Caco-2 (cell line): ENCODE measurements at regions of chr6 and their contacts with region 1.

Region 1: DNA sequence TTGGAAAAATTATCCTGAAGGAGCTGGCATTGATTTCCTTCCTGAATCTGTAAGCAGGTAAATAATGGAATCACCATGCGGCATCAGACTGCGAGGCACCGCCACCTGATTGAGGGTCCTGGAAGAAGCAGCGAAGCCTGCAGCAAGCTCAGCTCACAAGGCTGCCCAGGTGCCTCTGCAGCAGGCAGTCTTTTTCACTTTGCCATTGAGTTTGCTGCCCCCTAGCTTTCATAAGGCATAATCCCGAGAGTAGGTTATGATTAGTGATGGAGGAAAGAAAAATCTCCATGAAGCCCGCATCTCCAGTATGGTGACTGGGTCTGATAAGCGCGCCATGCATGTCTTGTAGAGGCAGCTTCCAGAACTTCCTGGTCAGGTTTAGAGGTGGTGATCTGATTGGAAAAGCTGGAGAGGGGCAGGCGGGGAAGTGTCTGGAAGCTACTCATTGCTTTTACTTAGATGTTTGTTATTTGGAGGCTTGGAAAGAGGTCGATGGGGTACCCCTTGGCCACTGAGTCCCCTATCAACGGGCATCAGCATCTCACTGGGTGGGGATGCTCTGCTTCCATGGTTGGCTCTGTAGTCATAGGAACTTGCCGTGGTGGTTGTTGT is 26.7 kb downstream of the IYD start:
- DNase-seq: peak; percentile 56 to 71
- H3K4me3 ChIP-seq: no peak overlapping the region
- H3K4me3 Mint-ChIP-seq: no peak overlapping the region
- H3K27ac Mint-ChIP-seq: no peak overlapping the region
- H3K4me1 ChIP-seq: no peaks in the 10 kb centered on the region
- H3K4me1 Mint-ChIP-seq: no peaks in the 10 kb centered on the region
- H3K27me3 ChIP-seq: no peaks in the 10 kb centered on the region
- H3K27me3 Mint-ChIP-seq: no peaks in the 10 kb centered on the region
- CTCF ChIP-seq: peak; percentile 64 to 78

Region 2: GRCh38 chr6:150079604-150080003 is 315.9 kb before region 1 on chr6:
- CTCF ChIA-PET with region 1: interaction called, 16 read pairs
- POLR2A ChIA-PET with region 1: no interaction called
- intact Hi-C with region 1: loop called (anchors 1 kb)
- DNase-seq: no peak
- H3K4me3 ChIP-seq: no peak overlapping the region
- H3K4me3 Mint-ChIP-seq: no peak overlapping the region
- H3K27ac Mint-ChIP-seq: no peak overlapping the region
- H3K4me1 ChIP-seq: no peaks in the 10 kb centered on the region
- H3K4me1 Mint-ChIP-seq: no peaks in the 10 kb centered on the region
- H3K27me3 ChIP-seq: no peaks in the 10 kb centered on the region; the same call in 1 of the 2 replicates
- H3K27me3 Mint-ChIP-seq: peaks cover 7% of the 10 kb centered on the region
- CTCF ChIP-seq: no peak

Region 3: DNA sequence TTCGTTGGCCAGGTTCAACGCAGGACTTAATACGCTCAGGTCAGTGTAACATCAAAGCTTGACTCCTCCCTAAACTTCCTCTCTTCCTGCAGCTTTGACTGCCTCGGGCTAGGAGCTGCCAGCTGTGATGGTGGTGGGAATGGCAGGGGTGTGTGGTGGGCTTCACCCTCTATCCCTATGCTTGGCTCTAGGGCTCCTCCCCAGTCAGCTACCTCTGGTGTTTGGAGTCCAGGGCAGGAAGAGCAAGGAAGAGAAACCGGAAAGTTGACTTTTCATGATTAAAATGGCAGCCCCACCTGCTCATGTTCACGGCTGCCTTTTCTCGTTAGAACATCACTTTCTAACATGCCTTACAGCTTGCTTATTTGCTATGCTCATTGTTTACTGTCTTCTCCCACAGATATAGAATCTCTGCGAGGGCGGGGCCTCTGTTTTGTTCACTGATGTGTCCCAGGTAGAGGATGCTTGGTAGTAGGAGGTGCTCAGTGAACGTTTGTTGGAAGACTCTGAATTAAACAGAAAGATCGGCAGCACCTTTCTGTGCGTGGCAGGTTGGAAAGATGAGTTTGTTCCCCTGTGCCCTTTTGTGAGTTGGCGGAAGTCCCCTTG is 268.7 kb before region 1 on chr6:
- CTCF ChIA-PET with region 1: no interaction called
- POLR2A ChIA-PET with region 1: no interaction called
- intact Hi-C with region 1: no loop called
- DNase-seq: no peak
- H3K4me3 ChIP-seq: no peak overlapping the region
- H3K4me3 Mint-ChIP-seq: no peak overlapping the region
- H3K27ac Mint-ChIP-seq: no peak overlapping the region
- H3K4me1 ChIP-seq: no peaks in the 10 kb centered on the region
- H3K4me1 Mint-ChIP-seq: no peaks in the 10 kb centered on the region
- H3K27me3 ChIP-seq: no peaks in the 10 kb centered on the region
- H3K27me3 Mint-ChIP-seq: no peaks in the 10 kb centered on the region
- CTCF ChIP-seq: no peak

Region 4: DNA sequence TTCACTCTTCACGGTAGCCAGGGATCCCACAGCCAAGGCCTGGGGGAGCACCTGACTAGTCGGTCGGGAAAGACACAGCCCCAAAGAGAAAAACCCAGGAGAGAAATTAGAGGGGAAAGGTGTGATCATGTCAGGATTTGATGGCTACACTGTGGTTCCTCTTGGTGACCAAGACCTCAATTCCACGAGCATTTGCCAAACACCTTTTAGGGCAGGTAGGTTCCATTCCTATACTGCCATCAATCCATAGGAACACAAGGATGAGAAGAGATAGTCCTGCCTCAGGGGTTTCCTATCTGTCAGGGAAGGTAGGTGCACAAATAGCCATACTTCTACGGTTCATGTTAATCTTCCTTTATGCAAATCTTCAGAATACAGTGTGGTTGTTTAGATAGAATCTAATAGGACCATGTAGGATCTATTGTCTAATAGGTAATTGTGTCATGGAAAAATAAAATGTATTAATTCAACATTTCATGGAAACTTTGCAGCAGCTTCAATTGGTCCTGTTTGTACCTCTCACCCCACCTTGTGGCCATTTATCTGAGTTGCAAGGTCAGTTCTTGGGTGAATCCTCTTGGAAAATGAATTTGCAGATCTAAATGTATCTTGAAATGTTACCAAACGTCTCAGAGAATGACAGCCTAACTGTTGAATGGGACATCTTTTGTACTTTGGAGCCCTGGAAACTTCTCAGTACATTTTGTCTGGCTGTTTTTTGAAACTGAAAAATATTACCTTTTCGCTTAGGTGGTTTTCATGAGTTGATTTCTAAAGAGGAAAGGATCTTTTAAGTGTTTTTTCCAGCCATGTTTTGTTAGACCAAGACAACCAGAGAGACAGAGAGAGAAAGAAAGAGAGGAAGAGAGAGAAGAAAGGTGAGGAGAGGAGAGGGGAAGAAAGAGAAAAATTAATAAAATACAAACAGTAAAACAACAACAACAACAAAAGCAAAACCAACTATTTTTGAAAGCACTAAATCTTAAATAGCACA is 60.4 kb before region 1 on chr6:
- CTCF ChIA-PET with region 1: interaction called, 3 read pairs
- POLR2A ChIA-PET with region 1: no interaction called
- intact Hi-C with region 1: loop called (anchors 1 kb)
- DNase-seq: peak; percentile 54 to 67
- H3K4me3 ChIP-seq: no peak overlapping the region
- H3K4me3 Mint-ChIP-seq: no peak overlapping the region
- H3K27ac Mint-ChIP-seq: no peak overlapping the region
- H3K4me1 ChIP-seq: no peaks in the 10 kb centered on the region
- H3K4me1 Mint-ChIP-seq: no peaks in the 10 kb centered on the region
- H3K27me3 ChIP-seq: no peaks in the 10 kb centered on the region
- H3K27me3 Mint-ChIP-seq: no peaks in the 10 kb centered on the region
- CTCF ChIP-seq: peak; percentile 72 to 83

Region 5: DNA sequence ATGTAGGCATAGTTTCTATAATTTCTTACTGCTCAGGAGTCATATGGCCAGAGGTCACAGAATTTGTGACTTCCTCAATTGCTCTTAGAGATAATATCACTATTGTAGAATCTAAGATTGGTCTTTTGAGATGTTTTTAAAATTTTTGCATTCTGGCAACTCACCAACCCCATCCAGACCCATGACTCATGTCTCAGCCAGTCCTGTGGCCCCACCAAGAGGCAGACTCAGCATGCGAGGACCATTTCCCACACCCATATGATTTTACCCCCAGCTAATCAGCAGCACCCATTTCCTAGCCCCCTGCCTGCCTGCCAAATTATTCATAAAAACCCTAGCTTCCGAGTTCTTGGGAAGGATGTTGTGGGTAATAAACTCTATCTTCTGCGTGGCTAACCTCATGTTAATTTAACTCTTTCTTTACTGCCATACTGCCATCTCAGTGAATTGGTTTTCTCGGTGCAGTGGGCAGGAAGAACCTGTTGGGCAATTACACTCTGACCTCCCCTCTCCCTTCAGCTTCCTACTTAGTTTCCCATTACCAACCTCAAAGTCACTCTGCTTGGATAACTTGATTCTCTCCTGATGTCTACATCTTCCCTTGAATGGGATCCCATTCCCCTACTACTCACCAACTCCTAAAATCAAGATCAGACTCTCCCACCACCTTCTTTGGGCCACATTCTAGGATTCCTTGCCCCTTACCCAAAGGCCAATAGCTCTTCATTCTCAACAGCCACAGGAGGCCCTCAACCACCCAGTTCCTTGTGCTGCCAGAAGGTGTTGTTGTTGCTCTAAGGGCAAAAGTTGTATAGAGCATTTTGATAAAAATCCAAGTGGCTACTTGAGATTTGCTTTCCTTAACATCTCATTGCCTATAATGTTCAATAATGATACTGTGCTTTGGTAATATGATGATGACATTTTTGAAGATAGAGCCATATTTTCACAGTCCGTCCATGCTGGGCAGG is 42.9 kb before region 1 on chr6:
- CTCF ChIA-PET with region 1: interaction called, 9 read pairs
- POLR2A ChIA-PET with region 1: no interaction called
- intact Hi-C with region 1: loop called (anchors 5 kb)
- DNase-seq: no peak
- H3K4me3 ChIP-seq: no peak overlapping the region
- H3K4me3 Mint-ChIP-seq: no peak overlapping the region
- H3K27ac Mint-ChIP-seq: no peak overlapping the region
- H3K4me1 ChIP-seq: peaks cover 24% of the 10 kb centered on the region
- H3K4me1 Mint-ChIP-seq: peaks cover 18% of the 10 kb centered on the region
- H3K27me3 ChIP-seq: no peaks in the 10 kb centered on the region
- H3K27me3 Mint-ChIP-seq: no peaks in the 10 kb centered on the region
- CTCF ChIP-seq: no peak

Region 6: DNA sequence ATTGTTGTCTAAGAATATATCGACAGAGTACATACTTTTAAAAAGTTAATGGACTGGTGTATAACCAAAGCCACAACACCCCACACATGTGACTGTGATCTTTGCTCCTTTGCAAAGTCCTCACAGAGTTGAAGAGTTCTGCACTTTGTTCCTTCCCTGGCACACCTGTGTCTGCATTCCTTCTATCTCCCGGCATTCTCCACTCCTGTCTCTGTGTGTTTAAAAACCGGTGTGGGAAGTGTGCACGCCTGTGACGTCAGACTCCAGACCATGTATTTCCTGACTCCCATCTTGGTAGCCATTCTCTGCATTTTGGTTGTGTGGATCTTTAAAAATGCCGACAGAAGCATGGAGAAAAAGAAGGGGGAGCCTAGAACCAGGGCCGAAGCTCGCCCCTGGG is 26.7 kb before region 1 on chr6 and contains the start of gene IYD:
- CTCF ChIA-PET with region 1: no interaction called
- POLR2A ChIA-PET with region 1: interaction called, 13 read pairs
- intact Hi-C with region 1: loop called (anchors 1 kb)
- DNase-seq: peak; percentile 84 to 90
- H3K4me3 ChIP-seq: peak within 1 kb of the TSS; percentile 5; the same call in 1 of the 2 replicates
- H3K4me3 Mint-ChIP-seq: no peak within 1 kb of the TSS
- H3K27ac Mint-ChIP-seq: no peak within 1 kb of the TSS
- H3K4me1 ChIP-seq: peaks cover 18% of the 10 kb centered on the region
- H3K4me1 Mint-ChIP-seq: no peaks in the 10 kb centered on the region
- H3K27me3 ChIP-seq: no peaks in the 10 kb centered on the region
- H3K27me3 Mint-ChIP-seq: no peaks in the 10 kb centered on the region
- CTCF ChIP-seq: no peak
- total RNA-seq, gene IYD: 26.5 and 32.6 TPM in 2 replicates